ENCODE measurements at regions of chr4 and their contacts with region 1.

Region 1: GRCh38 chr4:180664766-180665368 is 1578.3 kb upstream of the TENM3 start:
- DNase-seq: peak; percentile 90
- ATAC-seq: peak; percentile 87
- H3K4me3 ChIP-seq: no peak overlapping the region
- H3K27ac ChIP-seq: no peak overlapping the region
- H3K4me1 ChIP-seq: no peaks in the 10 kb centered on the region
- H3K27me3 ChIP-seq: no peaks in the 10 kb centered on the region
- CTCF ChIP-seq: peak; percentile 85
- POLR2A ChIP-seq: no peak
- RAD21 ChIP-seq: peak; percentile 80

Region 2: GRCh38 chr4:180009316-180009715 is 655.6 kb before region 1 on chr4:
- CTCF ChIA-PET with region 1: no interaction called
- POLR2A ChIA-PET with region 1: no interaction called
- dilution Hi-C with region 1: no loop called
- in situ Hi-C with region 1: no loop called
- intact Hi-C with region 1: no loop called
- DNase-seq: peak; percentile 28
- ATAC-seq: no peak
- H3K4me3 ChIP-seq: no peak overlapping the region
- H3K27ac ChIP-seq: no peak overlapping the region
- H3K4me1 ChIP-seq: no peaks in the 10 kb centered on the region
- H3K27me3 ChIP-seq: no peaks in the 10 kb centered on the region
- CTCF ChIP-seq: no peak
- POLR2A ChIP-seq: no peak
- RAD21 ChIP-seq: no peak

Region 3: DNA sequence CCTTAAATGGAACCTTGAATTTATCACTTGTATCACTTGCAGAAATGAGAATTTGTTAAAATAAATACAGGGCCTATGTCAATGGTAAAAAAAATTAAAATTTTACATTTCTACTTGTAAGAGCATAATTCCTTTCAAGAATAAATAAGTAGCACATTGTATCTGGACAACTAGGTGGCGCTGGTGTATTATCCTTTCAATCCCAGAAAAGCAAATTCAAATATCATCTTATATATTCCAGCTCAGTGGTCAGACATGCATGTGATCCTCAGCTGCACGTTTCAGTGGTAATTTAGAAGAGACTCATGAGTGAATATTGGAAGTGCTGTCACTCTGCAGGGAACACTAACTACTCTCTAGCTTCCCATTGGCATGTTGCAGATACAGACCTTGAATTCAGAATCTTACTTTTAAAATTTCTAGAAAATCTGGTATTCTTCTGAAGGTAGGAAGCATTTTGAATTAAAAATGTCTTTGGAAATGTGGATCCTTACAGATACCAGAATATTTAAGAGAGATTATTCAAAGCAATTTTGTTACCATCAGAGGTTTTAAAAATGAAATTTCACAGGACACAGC is 163.7 kb after region 1 on chr4:
- CTCF ChIA-PET with region 1: no interaction called
- POLR2A ChIA-PET with region 1: no interaction called
- dilution Hi-C with region 1: no loop called
- in situ Hi-C with region 1: no loop called
- intact Hi-C with region 1: loop called (anchors 2 kb)
- DNase-seq: peak; percentile 83
- ATAC-seq: peak; percentile 71
- H3K4me3 ChIP-seq: no peak overlapping the region
- H3K27ac ChIP-seq: no peak overlapping the region
- H3K4me1 ChIP-seq: 0 out of 2 replicates have a peak, but pooled peaks cover 2% of the 10 kb centered on the region
- H3K27me3 ChIP-seq: no peaks in the 10 kb centered on the region
- CTCF ChIP-seq: peak; percentile 86
- POLR2A ChIP-seq: no peak
- RAD21 ChIP-seq: peak; percentile 84

Region 4: DNA sequence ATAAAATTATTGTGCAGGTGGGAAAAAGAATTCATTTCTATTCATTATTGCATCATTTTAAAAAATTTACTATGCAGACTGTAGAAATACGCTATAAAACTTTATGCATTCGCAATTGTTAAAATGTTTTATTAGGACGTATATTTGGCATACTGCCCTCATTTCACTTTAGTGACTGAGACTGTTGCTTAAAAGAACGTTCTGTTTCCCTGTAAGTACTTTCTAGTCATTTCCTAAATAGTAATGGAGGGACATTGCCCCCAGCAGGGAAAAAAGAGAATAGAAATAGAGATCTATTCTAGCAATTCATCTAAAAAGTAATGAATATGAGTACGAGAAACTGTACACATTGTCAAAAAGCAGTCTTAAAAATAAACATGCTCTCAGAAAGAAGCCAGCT is 282.6 kb after region 1 on chr4:
- CTCF ChIA-PET with region 1: interaction called, 5 read pairs
- POLR2A ChIA-PET with region 1: no interaction called
- dilution Hi-C with region 1: loop called (anchors 25 kb)
- in situ Hi-C with region 1: loop called (anchors 10 kb)
- intact Hi-C with region 1: loop called (anchors 1 kb)
- DNase-seq: peak; percentile 44
- ATAC-seq: peak; percentile 46
- H3K4me3 ChIP-seq: no peak overlapping the region
- H3K27ac ChIP-seq: no peak overlapping the region
- H3K4me1 ChIP-seq: no peaks in the 10 kb centered on the region
- H3K27me3 ChIP-seq: no peaks in the 10 kb centered on the region
- CTCF ChIP-seq: peak; percentile 52
- POLR2A ChIP-seq: no peak
- RAD21 ChIP-seq: peak; percentile 61

Region 5: DNA sequence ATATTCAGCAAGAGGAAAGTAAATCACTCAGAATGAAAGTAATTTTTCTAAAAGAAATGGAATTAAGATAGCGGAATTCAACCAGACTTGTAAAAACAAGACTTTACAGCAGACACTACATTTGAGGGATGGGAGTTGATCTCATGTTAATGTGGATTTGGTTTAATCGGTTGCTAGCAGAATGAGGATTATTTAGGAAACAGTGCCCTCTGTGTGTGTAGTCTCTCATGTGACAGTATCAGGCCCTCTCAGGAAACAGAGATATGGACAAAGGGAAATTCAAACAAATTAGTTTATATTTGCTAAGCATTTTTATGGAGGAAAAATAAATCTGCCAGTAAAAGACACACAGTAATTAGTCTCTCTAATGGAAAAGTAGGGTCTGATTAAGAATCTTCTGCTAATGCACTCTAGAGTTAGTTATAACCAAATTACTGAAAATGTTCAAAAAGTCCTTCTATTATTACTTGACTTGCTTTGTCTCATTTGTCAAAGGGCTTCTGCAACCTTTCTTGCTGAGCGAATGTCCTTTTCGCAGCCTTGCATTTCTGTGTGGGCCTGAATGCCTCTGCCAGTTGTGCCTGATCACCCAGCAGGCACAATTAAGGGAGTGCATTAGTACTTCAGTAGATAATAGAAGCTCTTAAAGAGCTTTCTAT is 296.0 kb after region 1 on chr4:
- CTCF ChIA-PET with region 1: no interaction called
- POLR2A ChIA-PET with region 1: no interaction called
- dilution Hi-C with region 1: loop called (anchors 25 kb)
- in situ Hi-C with region 1: loop called (anchors 10 kb)
- intact Hi-C with region 1: no loop called
- DNase-seq: no peak
- ATAC-seq: no peak
- H3K4me3 ChIP-seq: no peak overlapping the region
- H3K27ac ChIP-seq: no peak overlapping the region
- H3K4me1 ChIP-seq: no peaks in the 10 kb centered on the region
- H3K27me3 ChIP-seq: no peaks in the 10 kb centered on the region
- CTCF ChIP-seq: 0 out of 2 replicates have a peak, but pooled peaks have one; percentile 9
- POLR2A ChIP-seq: no peak
- RAD21 ChIP-seq: no peak

Region 6: GRCh38 chr4:181528570-181529184 is 863.8 kb after region 1 on chr4:
- CTCF ChIA-PET with region 1: interaction called, 6 read pairs
- POLR2A ChIA-PET with region 1: no interaction called
- dilution Hi-C with region 1: no loop called
- in situ Hi-C with region 1: no loop called
- intact Hi-C with region 1: loop called (anchors 2 kb)
- DNase-seq: peak; percentile 73
- ATAC-seq: peak; percentile 97
- H3K4me3 ChIP-seq: no peak overlapping the region
- H3K27ac ChIP-seq: no peak overlapping the region
- H3K4me1 ChIP-seq: no peaks in the 10 kb centered on the region
- H3K27me3 ChIP-seq: peaks cover 4% of the 10 kb centered on the region; the same call in 1 of the 2 replicates
- CTCF ChIP-seq: peak; percentile 91
- POLR2A ChIP-seq: no peak
- RAD21 ChIP-seq: peak; percentile 90

Measured in IMR-90 (cell line).